ENCODE measurements at regions of chr10 and their contacts with region 1.

Region 1: GRCh38 chr10:90787393-90788198 is 70.2 kb downstream of the HTR7 start:
- DNase-seq: no peak
- H3K4me3 ChIP-seq: no peak overlapping the region
- H3K27ac ChIP-seq: no peak overlapping the region
- H3K4me1 ChIP-seq: no peaks in the 10 kb centered on the region
- H3K27me3 ChIP-seq: no peaks in the 10 kb centered on the region
- CTCF ChIP-seq: peak; percentile 24 to 82 (median 61)

Region 2: DNA sequence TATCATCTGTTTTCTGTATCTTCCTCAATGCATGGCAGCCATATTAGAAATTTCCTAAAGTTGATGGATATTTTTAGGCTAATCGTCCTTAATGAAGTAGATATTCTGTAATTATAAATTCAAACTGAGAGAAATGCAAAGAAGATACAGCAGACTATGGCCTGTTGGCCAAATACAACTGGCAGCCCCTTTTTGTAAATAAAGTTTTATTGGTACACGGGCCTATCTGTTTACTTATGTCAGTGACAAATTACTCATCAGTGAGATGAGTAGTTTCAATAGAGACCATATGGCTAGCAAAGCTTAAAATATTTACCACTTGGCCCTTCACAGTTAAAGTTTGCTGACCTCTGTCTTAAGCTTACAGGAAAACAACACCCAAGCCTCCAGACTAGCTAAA is 42.0 kb before region 1 on chr10:
- intact Hi-C with region 1: loop called (anchors 5 kb)
- DNase-seq: no peak
- H3K4me3 ChIP-seq: no peak overlapping the region
- H3K27ac ChIP-seq: no peak overlapping the region
- H3K4me1 ChIP-seq: no peaks in the 10 kb centered on the region
- H3K27me3 ChIP-seq: no peaks in the 10 kb centered on the region
- CTCF ChIP-seq: no peak

Measured in ascending aorta (tissue), 2 donors.